ENCODE measurements at regions of chr12 and their contacts with region 1.

Region 1: DNA sequence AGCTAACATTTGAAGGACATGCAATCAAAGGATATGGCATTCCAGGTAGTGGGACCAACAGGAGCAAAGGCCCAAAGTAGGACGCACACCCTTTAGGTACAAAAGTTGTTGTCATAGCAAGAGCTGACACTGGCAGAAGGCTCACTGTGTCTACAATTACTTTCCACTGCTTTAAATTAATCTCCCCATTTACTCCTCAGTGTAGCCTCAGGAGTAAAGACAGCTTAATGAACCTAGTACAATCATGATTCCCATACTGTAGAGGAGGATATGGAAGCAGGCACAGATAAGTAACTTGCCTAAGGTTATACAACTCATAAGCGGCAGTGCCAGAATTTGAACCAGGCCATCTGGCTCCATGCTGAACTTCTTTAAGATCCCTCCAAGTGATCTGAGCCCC is 212.9 kb upstream of the SFSWAP start:
- DNase-seq: no peak
- ATAC-seq: no peak
- H3K4me3 ChIP-seq: no peak overlapping the region
- H3K27ac ChIP-seq: no peak overlapping the region
- H3K4me1 ChIP-seq: no peaks in the 10 kb centered on the region
- H3K27me3 ChIP-seq: peaks cover 0 to 14% (median 0%) of the 10 kb centered on the region in 9 donors
- CTCF ChIP-seq: no peak
- POLR2A ChIP-seq: no peak

Region 2: GRCh38 chr12:131561891-131562684 is 64.1 kb after region 1 on chr12:
- intact Hi-C with region 1: loop called in 1 of 10 experiments (anchors 2 kb)
- DNase-seq: no peak
- ATAC-seq: no peak
- H3K4me3 ChIP-seq: no peak overlapping the region
- H3K27ac ChIP-seq: no peak overlapping the region
- H3K4me1 ChIP-seq: no peaks in the 10 kb centered on the region
- H3K27me3 ChIP-seq: peaks cover 0 to 28% (median 3%) of the 10 kb centered on the region in 9 donors
- CTCF ChIP-seq: no peak
- POLR2A ChIP-seq: no peak

Region 3: DNA sequence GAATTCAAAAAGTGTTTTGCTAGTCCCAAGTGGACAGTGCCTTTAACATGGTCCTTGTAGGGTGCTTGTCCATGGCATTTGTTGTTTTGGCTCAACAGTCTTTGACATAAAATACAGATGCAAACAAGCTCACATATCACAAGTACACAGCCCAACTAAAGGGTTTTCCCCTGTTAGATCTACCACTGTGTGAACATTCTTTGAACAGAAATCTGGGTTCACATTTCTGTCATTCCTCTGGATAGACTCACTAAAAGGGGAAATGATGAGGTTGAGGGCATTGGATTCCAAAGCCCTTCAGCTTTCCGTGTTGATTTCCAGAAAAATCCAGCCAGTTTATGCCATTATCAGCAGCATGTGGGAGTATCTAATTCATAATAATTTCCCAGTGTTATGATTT is 505.9 kb after region 1 on chr12:
- intact Hi-C with region 1: no loop called
- DNase-seq: no peak
- ATAC-seq: no peak
- H3K4me3 ChIP-seq: no peak overlapping the region
- H3K27ac ChIP-seq: no peak overlapping the region
- H3K4me1 ChIP-seq: peaks cover 0 to 3% (median 0%) of the 10 kb centered on the region in 12 donors
- H3K27me3 ChIP-seq: no peaks in the 10 kb centered on the region
- CTCF ChIP-seq: no peak
- POLR2A ChIP-seq: no peak

Measured in heart left ventricle (tissue), 16 donors.